ENCODE measurements at regions of chr17 and their contacts with region 1.

Region 1: GRCh38 chr17:73429440-73430164 is 117.8 kb upstream of the CDC42EP4 start:
- DNase-seq: peak; percentile 96
- H3K4me3 ChIP-seq: peak overlapping the region in 1 of 2 experiments; percentile 18; a peak in 1 of 4 replicates
- H3K27ac ChIP-seq: no peak overlapping the region
- H3K4me1 ChIP-seq: peaks cover 0 to 12% of the 10 kb centered on the region in 2 experiments; a peak in 1 of 4 replicates
- H3K27me3 ChIP-seq: no peaks in the 10 kb centered on the region
- CTCF ChIP-seq: peak; percentile 100
- EP300 ChIP-seq: peak in 1 of 2 experiments; percentile 24; a peak in 1 of 4 replicates
- RAD21 ChIP-seq: peak; percentile 100

Region 2: GRCh38 chr17:73247726-73248125 is 181.9 kb before region 1 on chr17:
- CTCF ChIA-PET with region 1: no interaction called
- POLR2A ChIA-PET with region 1: no interaction called
- DNase-seq: no peak
- H3K4me3 ChIP-seq: no peak overlapping the region
- H3K27ac ChIP-seq: no peak overlapping the region
- H3K4me1 ChIP-seq: no peaks in the 10 kb centered on the region
- H3K27me3 ChIP-seq: no peaks in the 10 kb centered on the region
- CTCF ChIP-seq: peak; percentile 41
- EP300 ChIP-seq: no peak
- RAD21 ChIP-seq: no peak

Region 3: GRCh38 chr17:73446617-73447016 is 17.0 kb after region 1 on chr17:
- CTCF ChIA-PET with region 1: interaction called, 49 read pairs
- POLR2A ChIA-PET with region 1: no interaction called
- DNase-seq: no peak
- H3K4me3 ChIP-seq: no peak overlapping the region
- H3K27ac ChIP-seq: no peak overlapping the region
- H3K4me1 ChIP-seq: peaks cover 0 to 6% of the 10 kb centered on the region in 2 experiments; a peak in 1 of 4 replicates
- H3K27me3 ChIP-seq: no peaks in the 10 kb centered on the region
- CTCF ChIP-seq: no peak
- EP300 ChIP-seq: no peak
- RAD21 ChIP-seq: no peak

Region 4: GRCh38 chr17:73498886-73499554 is 69.4 kb after region 1 on chr17:
- CTCF ChIA-PET with region 1: interaction called, 35 read pairs
- POLR2A ChIA-PET with region 1: no interaction called
- DNase-seq: peak; percentile 71
- H3K4me3 ChIP-seq: no peak overlapping the region
- H3K27ac ChIP-seq: no peak overlapping the region
- H3K4me1 ChIP-seq: peaks cover 0 to 27% of the 10 kb centered on the region in 2 experiments; a peak in 1 of 4 replicates
- H3K27me3 ChIP-seq: no peaks in the 10 kb centered on the region
- CTCF ChIP-seq: no peak
- EP300 ChIP-seq: no peak
- RAD21 ChIP-seq: no peak

Region 5: DNA sequence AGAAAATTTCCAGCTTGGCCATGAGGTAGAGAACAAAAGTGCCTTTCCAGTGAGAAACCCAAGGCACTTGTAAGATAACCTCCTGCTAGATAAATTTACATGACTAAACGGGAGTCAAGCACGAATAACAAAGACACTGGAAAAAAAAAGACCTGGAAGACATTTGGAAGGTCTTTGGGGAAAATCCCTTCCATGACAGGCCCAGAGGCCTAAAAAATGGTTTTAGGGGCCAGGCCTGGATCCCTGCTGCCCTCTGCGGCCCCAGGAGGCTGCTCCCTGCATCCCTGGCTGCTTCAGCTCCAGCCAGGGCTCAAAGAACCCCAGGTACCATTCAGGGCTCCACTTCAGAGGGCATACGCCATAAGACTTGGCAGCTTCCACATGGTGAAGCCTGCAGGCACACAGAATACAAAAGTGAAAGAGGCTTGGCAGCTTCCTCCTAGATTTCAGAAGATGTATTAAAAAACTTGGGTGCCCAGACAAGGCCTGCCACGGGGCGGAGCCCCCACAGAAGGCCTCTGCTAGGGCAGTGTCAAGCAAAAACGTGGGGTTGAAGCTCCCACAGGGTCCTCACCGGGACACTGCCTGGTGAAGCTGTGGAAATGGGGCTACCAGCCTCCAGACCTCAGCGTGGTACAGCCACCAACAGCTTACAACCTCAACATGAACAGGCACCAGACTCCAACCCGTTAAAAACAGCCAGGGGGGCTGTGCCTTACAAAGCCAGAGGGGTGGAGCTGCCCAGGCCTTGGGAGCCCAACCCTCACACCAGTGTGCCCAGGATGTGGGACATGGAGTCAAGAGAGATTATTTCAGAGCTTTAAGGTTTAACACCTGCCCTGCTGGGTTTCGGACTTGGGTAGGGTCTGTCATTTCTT is 137.5 kb after region 1 on chr17:
- CTCF ChIA-PET with region 1: interaction called, 15 read pairs
- POLR2A ChIA-PET with region 1: no interaction called
- DNase-seq: no peak
- H3K4me3 ChIP-seq: no peak overlapping the region
- H3K27ac ChIP-seq: no peak overlapping the region
- H3K4me1 ChIP-seq: no peaks in the 10 kb centered on the region
- H3K27me3 ChIP-seq: no peaks in the 10 kb centered on the region
- CTCF ChIP-seq: no peak
- EP300 ChIP-seq: no peak
- RAD21 ChIP-seq: no peak

Region 6: GRCh38 chr17:73639932-73640331 is 210.3 kb after region 1 on chr17:
- CTCF ChIA-PET with region 1: interaction called, 118 read pairs
- POLR2A ChIA-PET with region 1: no interaction called
- DNase-seq: no peak
- H3K4me3 ChIP-seq: no peak overlapping the region
- H3K27ac ChIP-seq: no peak overlapping the region
- H3K4me1 ChIP-seq: peaks cover 0 to 14% of the 10 kb centered on the region in 2 experiments; a peak in 1 of 4 replicates
- H3K27me3 ChIP-seq: peaks cover 25% of the 10 kb centered on the region
- CTCF ChIP-seq: no peak
- EP300 ChIP-seq: no peak
- RAD21 ChIP-seq: no peak

Region 7: DNA sequence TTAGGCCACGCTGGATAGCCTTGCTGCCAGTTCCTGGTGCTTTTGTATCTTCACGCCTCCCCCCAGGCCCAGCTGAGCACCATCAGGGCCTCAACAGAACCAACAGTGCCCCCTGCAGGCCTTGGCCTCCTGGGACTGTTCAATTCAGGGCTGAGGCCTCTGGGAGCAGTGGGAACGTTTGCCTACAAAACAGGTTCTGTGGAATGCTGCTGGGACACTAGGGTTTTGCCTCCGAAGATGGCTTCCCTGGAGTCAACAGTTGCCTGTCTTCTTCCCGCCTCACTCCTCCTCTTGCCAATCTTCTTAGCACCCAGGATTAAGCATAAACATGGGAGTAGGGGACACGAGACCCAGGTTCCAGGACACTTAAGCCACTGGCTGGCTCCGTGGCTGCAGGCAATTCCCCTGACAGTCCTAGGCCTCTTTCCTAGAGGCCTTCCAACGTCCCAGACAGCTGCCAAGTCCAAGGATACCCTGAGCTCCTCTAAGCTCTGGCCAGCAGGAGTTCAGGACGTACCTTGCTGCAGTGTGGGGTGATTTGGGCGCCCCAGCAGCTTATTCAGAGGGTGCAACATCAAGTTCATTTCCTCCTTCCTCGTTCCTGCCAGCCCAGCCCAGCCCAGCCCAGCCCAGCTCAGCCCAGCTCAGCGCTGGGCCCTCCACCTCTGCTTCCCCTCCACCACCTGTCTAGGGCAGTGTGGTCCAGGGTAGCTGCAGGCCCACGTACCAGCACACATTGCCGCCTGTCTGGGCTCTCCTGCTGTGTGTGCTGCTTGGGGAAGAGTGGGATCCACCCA is 527.3 kb after region 1 on chr17:
- CTCF ChIA-PET with region 1: interaction called, 14 read pairs
- POLR2A ChIA-PET with region 1: no interaction called
- DNase-seq: peak; percentile 89
- H3K4me3 ChIP-seq: no peak overlapping the region
- H3K27ac ChIP-seq: no peak overlapping the region
- H3K4me1 ChIP-seq: peaks cover 0 to 6% of the 10 kb centered on the region in 2 experiments; a peak in 1 of 4 replicates
- H3K27me3 ChIP-seq: no peaks in the 10 kb centered on the region
- CTCF ChIP-seq: no peak; the same call in 1 of the 2 replicates
- EP300 ChIP-seq: no peak
- RAD21 ChIP-seq: peak; percentile 82

Measured in SK-N-SH (cell line).